ENCODE measurements at regions of chr20 and their contacts with region 1.

Region 1: DNA sequence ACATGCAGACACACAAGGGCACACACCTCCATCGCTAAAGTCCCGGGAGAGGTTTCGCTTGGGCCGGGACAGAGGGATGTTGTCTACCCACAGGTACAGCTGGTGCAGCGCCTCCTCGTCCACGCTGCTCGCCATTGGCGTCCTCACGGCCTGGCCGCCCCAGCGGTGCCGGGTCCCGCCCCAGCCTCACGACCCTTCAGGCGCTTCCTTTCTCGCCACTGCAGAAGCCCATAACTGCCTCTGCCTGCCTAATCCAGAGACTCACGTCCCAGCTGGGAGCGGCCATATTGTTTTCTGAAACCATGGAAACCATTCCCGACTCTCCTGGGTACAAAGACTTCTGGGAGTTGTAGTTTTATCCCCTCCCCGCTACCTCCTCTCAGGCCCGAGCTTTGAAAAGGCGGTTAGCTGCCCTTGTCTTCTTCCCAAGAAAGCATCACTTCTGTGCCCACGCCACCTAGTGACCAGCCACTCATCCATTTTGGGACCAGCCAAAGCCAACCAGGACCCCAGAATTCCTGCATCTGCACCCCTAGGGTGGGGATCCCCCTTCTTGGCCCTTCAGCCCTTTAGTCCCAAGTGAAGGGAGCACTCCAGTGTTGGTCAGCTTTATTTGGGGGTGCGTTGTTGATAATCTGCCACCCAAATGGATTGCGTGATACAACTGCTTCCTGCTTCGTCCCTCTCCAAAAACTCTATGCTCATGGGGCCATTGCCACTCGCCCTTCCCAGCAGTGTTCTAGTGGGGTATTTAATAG is at the start of gene SPEF1:
- DNase-seq: peak; percentile 97 to 100
- ATAC-seq: peak; percentile 67 to 83
- H3K4me3 ChIP-seq: peak within 1 kb of the TSS; percentile 47
- H3K27ac ChIP-seq: peak within 1 kb of the TSS in 1 of 2 experiments; percentile 23; a peak in 1 of 6 replicates
- H3K4me1 ChIP-seq: peaks cover 28% of the 10 kb centered on the region
- CTCF ChIP-seq: peak; percentile 86
- EP300 ChIP-seq: no peak
- POLR2A ChIP-seq: no peak; the same call in 1 of the 2 replicates
- RAD21 ChIP-seq: peak; percentile 66 to 70
- polyA plus RNA-seq, gene SPEF1: 0.41 and 0.46 TPM in 2 replicates

Region 2: DNA sequence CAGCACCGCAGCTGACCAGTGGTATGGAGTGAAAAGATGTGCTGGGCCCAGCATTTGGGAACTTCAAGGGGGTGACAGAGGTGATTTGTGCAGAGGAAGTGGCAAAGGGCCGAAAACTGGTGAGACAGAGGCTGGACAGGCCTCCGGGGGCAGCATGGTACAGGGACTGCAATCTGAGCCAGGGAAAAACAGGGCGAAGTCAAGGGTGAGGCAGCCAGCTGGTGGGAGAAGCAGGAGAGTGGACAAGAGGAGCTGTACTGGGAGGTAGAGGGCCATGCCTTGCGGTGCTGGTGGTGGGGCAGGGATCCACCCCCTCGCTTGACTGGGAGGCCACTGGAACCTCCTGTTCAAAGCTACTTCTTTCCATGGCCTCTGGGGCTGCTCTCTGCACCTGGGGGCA is 110.8 kb before region 1 on chr20:
- CTCF ChIA-PET with region 1: interaction called, 70 read pairs
- POLR2A ChIA-PET with region 1: no interaction called
- DNase-seq: no peak
- ATAC-seq: peak; percentile 4 to 27; a peak in 4 of 6 replicates
- H3K4me3 ChIP-seq: no peak overlapping the region
- H3K27ac ChIP-seq: no peak overlapping the region
- H3K4me1 ChIP-seq: peaks cover 21% of the 10 kb centered on the region
- CTCF ChIP-seq: no peak
- EP300 ChIP-seq: no peak
- POLR2A ChIP-seq: no peak
- RAD21 ChIP-seq: 0 out of 5 replicates have a peak, but pooled peaks of 1 of the 2 experiments have one; percentile 8

Region 3: GRCh38 chr20:3679749-3680700 is 101.3 kb before region 1 on chr20:
- CTCF ChIA-PET with region 1: interaction called, 70 read pairs
- POLR2A ChIA-PET with region 1: interaction called, 12 read pairs
- DNase-seq: no peak
- ATAC-seq: no peak
- H3K4me3 ChIP-seq: no peak overlapping the region
- H3K27ac ChIP-seq: peak overlapping the region in 1 of 2 experiments; percentile 31; a peak in 2 of 6 replicates
- H3K4me1 ChIP-seq: peaks cover 25% of the 10 kb centered on the region; the same call in 2 of the 3 replicates
- CTCF ChIP-seq: no peak
- EP300 ChIP-seq: no peak
- POLR2A ChIP-seq: no peak
- RAD21 ChIP-seq: no peak

Region 4: GRCh38 chr20:3716195-3716834 is 65.0 kb before region 1 on chr20:
- CTCF ChIA-PET with region 1: interaction called, 22 read pairs
- POLR2A ChIA-PET with region 1: no interaction called
- DNase-seq: peak; percentile 73 to 74
- ATAC-seq: peak; percentile 89 to 97
- H3K4me3 ChIP-seq: no peak overlapping the region
- H3K27ac ChIP-seq: no peak overlapping the region
- H3K4me1 ChIP-seq: no peaks in the 10 kb centered on the region
- CTCF ChIP-seq: peak; percentile 68
- EP300 ChIP-seq: no peak
- POLR2A ChIP-seq: no peak
- RAD21 ChIP-seq: peak; percentile 77 to 92

Region 5: DNA sequence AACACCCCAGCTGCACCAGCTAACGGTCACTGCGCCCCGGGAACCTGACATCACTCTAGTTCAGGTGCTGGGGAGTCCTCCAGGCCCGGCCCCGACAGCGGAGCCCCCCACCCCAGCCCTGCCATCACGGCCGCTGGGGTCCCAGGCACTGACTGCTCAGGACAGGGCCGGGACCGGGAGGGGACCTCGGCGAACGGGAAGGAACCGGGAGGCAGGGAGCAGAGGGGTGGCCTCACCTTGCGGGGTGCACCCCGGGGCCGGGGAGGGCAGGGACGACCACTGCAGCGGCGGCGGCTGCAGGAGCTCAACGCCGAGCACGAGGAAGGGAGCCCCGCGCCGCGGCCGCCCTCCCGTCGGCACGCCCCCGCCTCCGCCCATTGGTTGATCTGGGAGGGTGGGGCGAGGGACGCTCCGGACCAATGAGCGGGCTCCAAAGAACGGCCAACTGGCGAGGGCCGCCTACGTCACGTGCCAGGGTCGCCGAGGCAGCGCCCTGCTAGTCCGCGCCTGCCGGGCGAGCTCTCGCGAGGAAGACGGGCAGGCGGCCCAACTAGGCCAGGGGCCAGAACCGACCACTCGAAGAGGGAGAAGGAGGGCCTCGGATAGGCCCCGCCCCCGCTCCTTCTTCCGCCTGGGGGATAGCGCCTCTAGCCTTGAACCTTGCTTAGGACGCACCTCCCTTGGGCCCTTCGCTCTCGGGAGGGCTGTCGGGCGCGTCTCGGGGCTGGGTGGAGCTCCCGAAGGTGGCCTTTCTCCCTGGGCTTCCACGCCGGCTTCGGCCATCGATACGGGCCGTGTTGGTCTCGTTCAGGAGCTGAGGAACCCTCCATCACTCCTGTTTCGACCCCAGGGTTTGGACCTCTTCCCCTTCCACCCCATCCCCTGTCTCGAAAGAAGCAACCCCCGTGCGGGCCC is 13.6 kb before region 1 on chr20 and contains the start of gene ADISSP:
- CTCF ChIA-PET with region 1: interaction called, 1,634 read pairs
- POLR2A ChIA-PET with region 1: interaction called, 27 read pairs
- DNase-seq: peak; percentile 99
- ATAC-seq: peak; percentile 85 to 93
- H3K4me3 ChIP-seq: peak within 1 kb of the TSS; percentile 87
- H3K27ac ChIP-seq: peak within 1 kb of the TSS; percentile 86 to 92
- H3K4me1 ChIP-seq: peaks cover 20% of the 10 kb centered on the region
- CTCF ChIP-seq: no peak; the same call in 2 of the 3 replicates
- EP300 ChIP-seq: no peak
- POLR2A ChIP-seq: peak; percentile 94
- RAD21 ChIP-seq: no peak
- polyA plus RNA-seq, gene ADISSP: 43.9 and 44.0 TPM in 2 replicates

Region 6: DNA sequence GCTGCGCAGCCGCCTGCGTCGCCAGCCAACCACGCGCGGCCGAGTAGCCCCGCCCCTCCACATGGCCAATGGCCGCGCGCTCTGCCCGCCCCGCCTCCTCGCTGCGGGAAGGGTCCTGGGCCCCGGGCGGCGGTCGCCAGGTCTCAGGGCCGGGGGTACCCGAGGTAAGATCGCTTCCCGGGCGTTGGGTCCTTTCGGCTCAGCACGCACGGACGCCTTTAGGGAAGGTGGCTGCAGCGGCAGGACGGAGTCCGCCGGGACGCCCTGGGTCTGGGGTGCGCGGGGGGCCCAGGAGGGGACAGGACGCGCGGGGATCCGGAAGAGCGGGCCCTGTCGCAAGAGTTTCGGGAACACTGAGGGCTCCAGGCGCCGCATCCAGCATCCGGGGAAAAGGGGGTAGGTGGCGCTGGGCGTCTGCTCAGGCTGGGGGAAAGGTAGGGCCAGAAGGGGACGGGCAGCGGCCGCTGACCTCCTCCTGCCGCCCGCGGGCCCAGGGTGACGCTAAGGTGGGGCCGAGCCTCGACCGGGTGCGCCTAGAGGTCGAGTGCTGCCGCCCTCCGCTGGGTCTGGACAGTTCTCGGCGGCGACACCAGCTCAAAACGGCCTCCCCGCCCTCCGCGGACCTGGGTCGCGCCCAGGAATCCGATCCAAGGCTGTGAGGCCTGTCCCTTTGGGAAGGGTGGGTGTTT is 65.6 kb after region 1 on chr20 and contains the start of gene MAVS:
- CTCF ChIA-PET with region 1: interaction called, 97 read pairs
- POLR2A ChIA-PET with region 1: interaction called, 10 read pairs
- DNase-seq: peak; percentile 87 to 91
- ATAC-seq: peak; percentile 96 to 98
- H3K4me3 ChIP-seq: peak within 1 kb of the TSS; percentile 70
- H3K27ac ChIP-seq: peak within 1 kb of the TSS; percentile 86 to 92
- H3K4me1 ChIP-seq: peaks cover 28% of the 10 kb centered on the region
- CTCF ChIP-seq: peak; percentile 17; the same call in 2 of the 3 replicates
- EP300 ChIP-seq: no peak
- POLR2A ChIP-seq: peak; percentile 78
- RAD21 ChIP-seq: no peak
- polyA plus RNA-seq, gene MAVS: 18.9 and 25.7 TPM in 2 replicates

Measured in A549 (cell line).